ENCODE measurements at regions of chr9 and their contacts with region 1.

Region 1: DNA sequence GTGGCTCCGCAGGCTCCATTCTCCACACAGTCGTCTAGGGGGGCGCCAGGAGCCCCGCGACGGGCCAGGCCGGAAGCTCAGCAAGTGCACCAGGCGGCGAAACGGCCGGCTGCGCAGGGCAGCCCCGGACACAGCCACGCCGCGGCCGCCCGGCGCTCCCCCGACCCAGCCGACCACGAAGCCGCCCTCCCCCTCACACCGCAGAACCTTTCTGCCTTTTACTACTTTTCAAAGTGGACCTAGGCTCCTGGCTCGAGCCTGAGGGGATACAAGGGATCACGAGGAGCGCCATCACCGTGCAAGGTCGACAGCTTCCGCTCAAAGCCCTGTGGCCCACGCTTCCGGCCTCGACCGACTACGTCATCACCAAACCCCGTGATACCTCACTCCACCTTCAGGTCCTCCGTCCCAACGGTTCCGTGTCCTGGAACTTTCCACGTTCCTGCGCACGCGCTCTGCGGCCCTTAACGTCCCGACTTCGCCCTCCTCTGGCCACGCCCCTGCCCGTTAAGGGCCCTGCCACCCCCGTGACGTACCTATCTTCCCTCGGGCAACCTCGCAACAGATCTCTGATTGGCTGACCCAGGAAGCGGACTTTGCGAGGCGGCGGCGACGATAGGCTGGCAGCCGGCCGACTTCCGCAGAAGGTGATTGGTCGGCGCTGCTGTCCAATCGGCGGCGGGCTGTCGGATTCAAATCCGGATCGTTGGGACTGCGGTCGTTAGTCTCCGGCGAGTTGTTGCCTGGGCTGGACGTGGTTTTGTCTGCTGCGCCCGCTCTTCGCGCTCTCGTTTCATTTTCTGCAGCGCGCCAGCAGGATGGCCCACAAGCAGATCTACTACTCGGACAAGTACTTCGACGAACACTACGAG is at the start of gene CKS2:
- DNase-seq: peak; percentile 99 to 100
- H3K4me3 ChIP-seq: peak within 1 kb of the TSS; percentile 91
- H3K27ac ChIP-seq: peak within 1 kb of the TSS; percentile 100
- H3K4me1 ChIP-seq: peaks cover 3 to 11% of the 10 kb centered on the region in 2 donors
- H3K27me3 ChIP-seq: no peaks in the 10 kb centered on the region
- CTCF ChIP-seq: no peak
- total RNA-seq, gene CKS2: not detected

Region 2: DNA sequence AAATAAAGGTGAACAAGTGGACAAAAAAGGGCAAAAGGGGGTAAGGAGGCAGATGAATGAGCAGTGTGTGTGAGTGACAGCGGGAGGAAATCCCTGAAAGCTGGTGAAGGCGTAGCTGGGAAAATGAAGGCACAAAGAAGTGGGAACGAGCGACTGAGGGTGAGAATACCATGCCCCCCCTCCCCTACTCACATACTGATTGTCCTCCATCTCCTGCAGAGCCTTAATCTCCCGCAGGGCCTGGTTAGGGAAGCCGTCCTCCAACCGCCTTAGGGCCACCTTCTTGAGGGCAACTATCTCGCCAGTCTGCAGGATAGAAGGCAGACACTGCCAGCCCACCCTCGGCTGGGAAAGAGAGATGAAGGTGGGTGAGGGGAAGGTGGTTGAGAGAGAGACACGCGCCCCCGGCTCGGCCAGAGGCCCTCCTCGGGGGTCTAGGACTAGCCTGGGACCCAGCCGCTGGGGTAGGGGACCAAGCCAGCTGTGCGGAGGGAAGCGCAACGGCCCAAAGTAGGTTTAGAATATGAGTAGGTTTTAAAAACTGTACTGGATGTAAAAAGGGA is 1336.9 kb before region 1 on chr9:
- intact Hi-C with region 1: loop called (anchors 2 kb)
- DNase-seq: no peak
- H3K4me3 ChIP-seq: peak overlapping the region; percentile 72 to 75
- H3K27ac ChIP-seq: peak overlapping the region in 1 of 2 donors; percentile 6
- H3K4me1 ChIP-seq: peaks cover 0 to 18% of the 10 kb centered on the region in 2 donors
- H3K27me3 ChIP-seq: no peaks in the 10 kb centered on the region
- CTCF ChIP-seq: no peak

Region 3: GRCh38 chr9:89179895-89180667 is 130.6 kb before region 1 on chr9:
- intact Hi-C with region 1: loop called (anchors 5 kb)
- DNase-seq: peak; percentile 56 to 92
- H3K4me3 ChIP-seq: peak overlapping the region; percentile 41 to 66
- H3K27ac ChIP-seq: peak overlapping the region; percentile 60 to 82
- H3K4me1 ChIP-seq: peaks cover 7 to 10% of the 10 kb centered on the region in 2 donors
- H3K27me3 ChIP-seq: peaks cover 4% of the 10 kb centered on the region
- CTCF ChIP-seq: no peak

Measured in ascending aorta (tissue), 2 donors.